Ovary (tissue), 10 donors: ENCODE measurements at regions of chr6 and their contacts with region 1.

Region 1: GRCh38 chr6:88870717-88871330 is 92.6 kb downstream of the RNGTT start:
- DNase-seq: peak in 3 of 5 donors; percentile 10 to 33 (median 22)
- H3K4me3 ChIP-seq: no peak overlapping the region
- H3K27ac ChIP-seq: no peak overlapping the region
- H3K4me1 ChIP-seq: no peaks in the 10 kb centered on the region
- H3K27me3 ChIP-seq: no peaks in the 10 kb centered on the region
- CTCF ChIP-seq: peak; percentile 40 to 62 (median 57)
- EP300 ChIP-seq: no peak
- POLR2A ChIP-seq: no peak

Region 2: DNA sequence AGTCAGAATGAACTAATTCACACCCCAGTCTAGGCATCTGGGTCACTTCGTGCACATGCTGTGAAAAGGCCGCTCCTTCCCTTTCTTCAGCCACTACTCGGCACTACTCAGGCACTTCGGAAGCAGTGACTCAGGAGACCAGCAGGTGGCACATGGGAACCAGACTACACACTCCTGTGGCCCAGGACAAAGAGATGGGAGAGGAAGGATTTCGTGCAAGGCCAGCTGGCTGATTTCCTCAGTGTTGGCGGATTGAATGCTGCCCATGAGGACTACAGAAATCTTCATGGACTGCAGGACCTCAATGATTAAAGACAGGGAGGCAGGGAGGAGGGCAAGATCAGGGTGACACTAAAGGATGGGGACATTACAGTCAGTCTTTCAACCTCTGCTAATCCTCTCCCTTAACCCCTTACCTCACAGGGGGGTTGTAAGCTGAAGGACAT is 941.0 kb before region 1 on chr6:
- intact Hi-C with region 1: loop called in 2 of 4 experiments (anchors 10 kb)
- DNase-seq: peak; percentile 63 to 83 (median 74)
- H3K4me3 ChIP-seq: no peak overlapping the region
- H3K27ac ChIP-seq: no peak overlapping the region
- H3K4me1 ChIP-seq: no peaks in the 10 kb centered on the region
- H3K27me3 ChIP-seq: no peaks in the 10 kb centered on the region
- CTCF ChIP-seq: peak; percentile 29 to 73 (median 60)
- EP300 ChIP-seq: no peak
- POLR2A ChIP-seq: no peak